ENCODE measurements at regions of chr11 and their contacts with region 1.

Region 1: DNA sequence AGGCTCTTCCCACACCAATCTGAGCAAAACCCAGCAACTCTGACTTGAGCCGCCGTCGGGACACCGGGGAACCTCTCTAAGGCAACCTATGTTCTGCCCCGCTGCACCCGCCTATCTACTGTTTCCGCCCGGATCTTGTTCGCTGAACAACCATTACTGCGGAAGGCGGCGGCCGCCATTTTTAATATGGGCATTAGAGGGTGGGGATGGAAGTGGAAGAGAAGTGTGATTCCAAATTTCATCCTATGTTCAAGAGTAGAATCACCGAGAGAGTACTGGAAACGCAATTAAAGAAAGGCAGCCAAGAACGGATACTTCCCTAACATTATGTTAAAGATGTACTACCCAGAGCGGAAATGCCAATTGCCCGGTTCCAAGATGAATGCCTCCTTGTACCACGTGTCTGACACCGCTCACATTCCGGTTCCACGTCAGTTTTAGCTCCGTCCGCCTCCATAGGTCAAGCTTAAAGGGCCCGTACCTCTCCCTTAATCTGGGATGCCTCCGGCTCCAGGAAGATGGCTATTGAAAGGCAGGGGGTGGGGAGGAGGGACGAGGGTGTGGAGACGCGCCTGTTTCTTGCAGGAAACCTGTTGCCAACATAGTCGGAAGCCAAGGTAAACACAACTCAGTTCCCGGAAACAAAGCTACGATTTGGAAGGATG is at the start of gene DPAGT1:
- DNase-seq: peak; percentile 93
- ATAC-seq: peak; percentile 84
- H3K4me3 ChIP-seq: peak within 1 kb of the TSS; percentile 75 to 100 (median 89)
- H3K4me3 Mint-ChIP-seq: peak within 1 kb of the TSS; percentile 93
- H3K27ac ChIP-seq: peak within 1 kb of the TSS; percentile 88 to 91
- H3K27ac Mint-ChIP-seq: peak within 1 kb of the TSS; percentile 98
- H3K4me1 ChIP-seq: peaks cover 33 to 46% of the 10 kb centered on the region in 2 donors
- H3K4me1 Mint-ChIP-seq: peaks cover 61% of the 10 kb centered on the region
- H3K27me3 ChIP-seq: no peaks in the 10 kb centered on the region
- H3K27me3 Mint-ChIP-seq: no peaks in the 10 kb centered on the region
- CTCF ChIP-seq: no peak
- total RNA-seq, gene DPAGT1: 34.5 and 38.3 TPM in 2 replicates

Region 2: DNA sequence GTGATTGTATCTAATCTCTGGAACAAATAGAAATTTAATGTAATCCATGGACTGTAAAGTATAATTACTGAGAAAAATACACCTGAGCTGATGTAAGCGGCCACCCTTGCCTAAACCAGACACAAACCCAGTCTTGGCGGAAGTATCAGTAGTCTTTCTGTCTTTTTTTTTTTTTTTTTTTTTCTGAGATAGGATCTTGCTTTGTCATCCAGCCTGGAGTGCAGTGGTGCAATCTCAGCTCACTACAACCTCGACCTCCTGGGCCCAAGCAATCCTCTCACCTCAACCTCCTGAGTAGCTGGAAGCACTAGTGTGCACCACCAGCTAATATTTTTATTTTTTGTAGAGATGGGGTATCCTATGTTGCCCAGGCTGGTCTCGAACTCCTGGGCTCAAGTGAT is 223.7 kb before region 1 on chr11:
- CTCF ChIA-PET with region 1: no interaction called
- POLR2A ChIA-PET with region 1: interaction called, 10 read pairs
- intact Hi-C with region 1: no loop called
- DNase-seq: peak; percentile 31
- ATAC-seq: no peak
- H3K4me3 ChIP-seq: no peak overlapping the region
- H3K4me3 Mint-ChIP-seq: no peak overlapping the region
- H3K27ac ChIP-seq: peak overlapping the region; percentile 79 to 93
- H3K27ac Mint-ChIP-seq: peak overlapping the region; percentile 72
- H3K4me1 ChIP-seq: peaks cover 67% of the 10 kb centered on the region in 2 donors
- H3K4me1 Mint-ChIP-seq: peaks cover 75% of the 10 kb centered on the region
- H3K27me3 ChIP-seq: no peaks in the 10 kb centered on the region
- H3K27me3 Mint-ChIP-seq: no peaks in the 10 kb centered on the region
- CTCF ChIP-seq: no peak

Region 3: DNA sequence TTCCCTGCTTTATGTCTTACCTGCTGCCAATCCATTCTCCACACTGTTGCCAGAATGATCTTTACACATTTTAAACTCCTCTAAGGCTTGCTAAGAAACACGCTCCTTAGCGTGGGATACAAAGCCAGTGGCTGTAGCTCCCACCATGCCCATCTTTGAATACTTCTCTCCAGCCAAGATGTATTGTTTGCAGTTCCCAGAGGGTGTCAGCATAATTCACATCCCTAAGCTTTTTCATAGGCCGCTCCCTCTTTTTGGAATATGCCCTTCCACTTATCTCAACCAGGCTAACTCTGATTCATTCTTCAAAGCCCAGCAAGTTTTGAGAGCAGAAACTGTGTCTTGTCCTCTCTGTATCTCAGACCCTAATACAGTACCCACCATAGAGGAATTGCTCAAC is 153.9 kb before region 1 on chr11:
- CTCF ChIA-PET with region 1: no interaction called
- POLR2A ChIA-PET with region 1: no interaction called
- intact Hi-C with region 1: no loop called
- DNase-seq: no peak
- ATAC-seq: no peak
- H3K4me3 ChIP-seq: no peak overlapping the region
- H3K4me3 Mint-ChIP-seq: no peak overlapping the region
- H3K27ac ChIP-seq: no peak overlapping the region
- H3K27ac Mint-ChIP-seq: no peak overlapping the region
- H3K4me1 ChIP-seq: no peaks in the 10 kb centered on the region
- H3K4me1 Mint-ChIP-seq: no peaks in the 10 kb centered on the region
- H3K27me3 ChIP-seq: peaks cover 0 to 2% (median 0%) of the 10 kb centered on the region in 4 experiments
- H3K27me3 Mint-ChIP-seq: peaks cover 22% of the 10 kb centered on the region
- CTCF ChIP-seq: no peak

Region 4: GRCh38 chr11:119018074-119018938 is 83.6 kb before region 1 on chr11 and contains the starts of genes RPS25 and TRAPPC4:
- CTCF ChIA-PET with region 1: interaction called, 3 read pairs
- POLR2A ChIA-PET with region 1: interaction called, 13 read pairs
- intact Hi-C with region 1: loop called (anchors 1 kb)
- DNase-seq: peak; percentile 98
- ATAC-seq: peak; percentile 91
- H3K4me3 ChIP-seq: peak within 1 kb of the TSS; percentile 85 to 98 (median 93)
- H3K4me3 Mint-ChIP-seq: peak within 1 kb of the TSS; percentile 100
- H3K27ac ChIP-seq: peak within 1 kb of the TSS; percentile 91 to 92
- H3K27ac Mint-ChIP-seq: peak within 1 kb of the TSS; percentile 100
- H3K4me1 ChIP-seq: peaks cover 27 to 34% of the 10 kb centered on the region in 2 donors
- H3K4me1 Mint-ChIP-seq: peaks cover 46% of the 10 kb centered on the region
- H3K27me3 ChIP-seq: no peaks in the 10 kb centered on the region
- H3K27me3 Mint-ChIP-seq: no peaks in the 10 kb centered on the region
- CTCF ChIP-seq: no peak
- total RNA-seq, gene RPS25: 1,713 and 1,823 TPM in 2 replicates
- total RNA-seq, gene TRAPPC4: 61.5 and 64.5 TPM in 2 replicates

Region 5: DNA sequence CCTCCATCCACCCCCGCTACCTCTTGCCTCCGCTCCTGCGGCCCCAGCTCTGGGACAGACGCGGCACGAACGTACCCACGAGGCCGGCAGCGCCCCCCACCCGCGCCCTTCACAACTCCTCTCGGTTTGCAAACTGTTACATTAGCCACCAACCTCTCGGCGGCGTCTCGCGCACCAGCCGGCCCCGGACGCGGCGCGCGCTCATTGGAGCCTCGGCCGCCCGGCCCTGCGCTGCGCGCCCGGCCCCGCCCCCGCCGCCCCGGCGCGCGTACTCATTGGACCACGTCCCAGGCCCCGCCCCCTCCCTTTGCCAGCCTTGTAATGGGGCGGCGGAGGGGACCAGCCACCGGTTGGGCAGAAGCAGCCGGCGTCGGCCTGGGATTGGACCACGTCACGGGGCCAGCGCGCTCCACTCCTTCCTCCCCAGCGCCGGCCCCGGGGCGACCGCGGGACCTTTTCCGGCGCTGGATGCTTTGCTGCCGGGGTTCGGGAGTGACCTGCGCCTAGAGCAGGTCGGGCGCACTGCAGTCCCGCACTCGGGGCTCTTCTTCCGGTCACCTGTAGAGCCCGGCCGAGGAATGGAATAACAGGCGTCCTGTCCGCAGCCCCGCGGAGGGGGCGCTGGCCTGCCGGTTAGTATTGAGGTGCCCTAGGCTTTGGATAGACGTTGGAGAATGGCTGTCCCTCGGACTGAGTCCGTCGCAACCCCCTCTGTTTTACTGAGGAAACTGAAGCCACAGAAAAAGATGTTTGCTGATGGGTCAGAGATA is 44.7 kb before region 1 on chr11 and contains the start of gene HYOU1:
- CTCF ChIA-PET with region 1: interaction called, 4 read pairs
- POLR2A ChIA-PET with region 1: no interaction called
- intact Hi-C with region 1: loop called (anchors 2 kb)
- DNase-seq: peak; percentile 99
- ATAC-seq: peak; percentile 95
- H3K4me3 ChIP-seq: peak within 1 kb of the TSS; percentile 36 to 95 (median 90)
- H3K4me3 Mint-ChIP-seq: peak within 1 kb of the TSS; percentile 97
- H3K27ac ChIP-seq: peak within 1 kb of the TSS; percentile 75 to 93
- H3K27ac Mint-ChIP-seq: peak within 1 kb of the TSS; percentile 93
- H3K4me1 ChIP-seq: peaks cover 18 to 29% of the 10 kb centered on the region in 2 donors
- H3K4me1 Mint-ChIP-seq: peaks cover 36% of the 10 kb centered on the region
- H3K27me3 ChIP-seq: no peaks in the 10 kb centered on the region
- H3K27me3 Mint-ChIP-seq: no peaks in the 10 kb centered on the region
- CTCF ChIP-seq: peak; percentile 6
- total RNA-seq, gene HYOU1: 46.2 and 48.7 TPM in 2 replicates

Region 6: DNA sequence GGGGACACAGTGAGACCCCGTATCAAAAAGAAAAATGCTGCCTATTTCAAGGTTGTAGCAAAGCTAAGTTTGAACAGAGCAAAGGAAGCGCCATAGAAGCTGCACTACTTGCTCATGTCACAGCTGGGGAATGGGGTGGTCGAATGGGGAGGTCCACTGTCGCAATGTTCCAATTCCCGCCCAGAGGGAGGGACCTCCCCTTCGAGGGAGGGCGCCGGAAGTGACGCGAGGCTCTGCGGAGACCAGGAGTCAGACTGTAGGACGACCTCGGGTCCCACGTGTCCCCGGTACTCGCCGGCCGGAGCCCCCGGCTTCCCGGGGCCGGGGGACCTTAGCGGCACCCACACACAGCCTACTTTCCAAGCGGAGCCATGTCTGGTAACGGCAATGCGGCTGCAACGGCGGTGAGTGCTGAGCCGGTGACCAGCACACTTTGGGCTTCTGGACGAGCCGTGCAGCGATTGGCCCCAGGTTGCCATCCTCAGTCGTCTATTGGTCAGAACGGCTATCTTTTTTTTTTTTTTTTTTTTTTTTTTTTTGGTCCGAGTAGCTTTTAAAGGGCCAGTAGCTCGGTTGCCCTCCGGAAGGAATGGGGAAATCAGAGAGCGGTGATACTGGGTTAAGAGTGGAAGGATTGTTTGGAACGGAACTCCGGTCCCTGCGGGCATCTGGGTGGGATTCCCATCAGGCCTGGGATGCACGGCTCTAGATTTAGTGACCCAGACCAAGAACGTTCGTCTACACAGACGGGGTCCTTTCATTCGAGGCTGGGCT is 17.0 kb before region 1 on chr11 and contains the start of gene HMBS:
- CTCF ChIA-PET with region 1: interaction called, 9 read pairs
- POLR2A ChIA-PET with region 1: interaction called, 11 read pairs
- intact Hi-C with region 1: loop called (anchors 1 kb)
- DNase-seq: peak; percentile 97
- ATAC-seq: peak; percentile 91
- H3K4me3 ChIP-seq: peak within 1 kb of the TSS; percentile 74 to 90 (median 81)
- H3K4me3 Mint-ChIP-seq: peak within 1 kb of the TSS; percentile 98
- H3K27ac ChIP-seq: peak within 1 kb of the TSS; percentile 45 to 79
- H3K27ac Mint-ChIP-seq: peak within 1 kb of the TSS; percentile 95
- H3K4me1 ChIP-seq: peaks cover 12 to 21% of the 10 kb centered on the region in 2 donors
- H3K4me1 Mint-ChIP-seq: peaks cover 20% of the 10 kb centered on the region
- H3K27me3 ChIP-seq: no peaks in the 10 kb centered on the region
- H3K27me3 Mint-ChIP-seq: no peaks in the 10 kb centered on the region
- CTCF ChIP-seq: no peak
- total RNA-seq, gene HMBS: 7.6 and 9.2 TPM in 2 replicates

Region 7: GRCh38 chr11:119121008-119121810 is 19.3 kb after region 1 on chr11 and contains the start of gene HINFP:
- CTCF ChIA-PET with region 1: interaction called, 6 read pairs
- POLR2A ChIA-PET with region 1: interaction called, 11 read pairs
- intact Hi-C with region 1: loop called (anchors 1 kb)
- DNase-seq: peak; percentile 99
- ATAC-seq: peak; percentile 98
- H3K4me3 ChIP-seq: peak within 1 kb of the TSS; percentile 91 to 97 (median 95)
- H3K4me3 Mint-ChIP-seq: peak within 1 kb of the TSS; percentile 87
- H3K27ac ChIP-seq: peak within 1 kb of the TSS; percentile 72 to 90
- H3K27ac Mint-ChIP-seq: peak within 1 kb of the TSS; percentile 90
- H3K4me1 ChIP-seq: peaks cover 15 to 17% of the 10 kb centered on the region in 2 donors
- H3K4me1 Mint-ChIP-seq: peaks cover 26% of the 10 kb centered on the region
- H3K27me3 ChIP-seq: no peaks in the 10 kb centered on the region
- H3K27me3 Mint-ChIP-seq: no peaks in the 10 kb centered on the region
- CTCF ChIP-seq: no peak
- total RNA-seq, gene HINFP: 78.7 and 84.6 TPM in 2 replicates

Region 8: DNA sequence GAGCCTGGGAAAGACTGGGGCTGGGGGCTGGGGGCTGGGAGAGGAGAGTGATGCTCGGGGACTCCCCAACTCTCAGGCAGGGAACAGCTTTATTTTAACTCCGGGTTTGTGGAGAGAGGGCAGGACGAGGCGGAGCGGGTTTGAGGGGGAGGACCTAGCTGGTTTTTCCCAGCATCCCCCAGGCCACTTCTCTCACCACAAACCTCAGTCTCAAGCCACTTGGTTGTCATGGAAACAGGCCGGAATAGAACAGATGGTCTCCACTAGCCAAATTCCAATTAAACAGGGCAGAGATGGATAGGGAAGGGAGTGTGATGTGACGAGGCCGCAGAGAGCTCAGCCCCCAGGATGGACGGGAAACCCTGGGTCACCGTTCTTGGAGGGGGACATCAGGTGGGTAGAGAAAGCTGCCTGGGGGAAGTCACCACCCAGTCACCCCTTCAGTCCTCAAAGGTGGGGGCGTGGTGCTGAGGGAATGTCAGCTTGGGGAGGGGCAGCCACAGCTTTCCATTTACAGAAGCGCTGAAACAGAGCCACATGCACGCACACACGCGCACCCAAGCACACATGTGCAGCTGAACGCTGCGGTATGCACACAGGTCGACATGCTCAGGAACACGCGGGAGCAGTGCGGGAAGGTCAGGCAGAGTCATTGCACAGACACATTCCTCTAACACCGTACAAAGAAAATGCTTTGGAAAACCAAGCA is 607.9 kb after region 1 on chr11:
- CTCF ChIA-PET with region 1: no interaction called
- POLR2A ChIA-PET with region 1: no interaction called
- intact Hi-C with region 1: no loop called
- DNase-seq: no peak
- ATAC-seq: no peak
- H3K4me3 ChIP-seq: no peak overlapping the region
- H3K4me3 Mint-ChIP-seq: no peak overlapping the region
- H3K27ac ChIP-seq: no peak overlapping the region
- H3K27ac Mint-ChIP-seq: no peak overlapping the region
- H3K4me1 ChIP-seq: no peaks in the 10 kb centered on the region
- H3K4me1 Mint-ChIP-seq: no peaks in the 10 kb centered on the region
- H3K27me3 ChIP-seq: peaks cover 0 to 4% (median under 1%) of the 10 kb centered on the region in 4 experiments
- H3K27me3 Mint-ChIP-seq: peaks cover 37% of the 10 kb centered on the region
- CTCF ChIP-seq: no peak